Psoas muscle (tissue), 8 donors: ENCODE measurements at regions of chr1 and their contacts with region 1.

Region 1: GRCh38 chr1:54547601-54548388 is at the start of gene ACOT11:
- DNase-seq: peak; percentile 88 to 96
- ATAC-seq: peak; percentile 91 to 94 (median 93)
- H3K4me3 ChIP-seq: peak within 1 kb of the TSS; percentile 63
- H3K27ac ChIP-seq: peak within 1 kb of the TSS; percentile 90
- H3K4me1 ChIP-seq: peaks cover 49% of the 10 kb centered on the region
- H3K27me3 ChIP-seq: no peaks in the 10 kb centered on the region
- CTCF ChIP-seq: peak; percentile 68
- total RNA-seq, gene ACOT11: 2.4 to 13.9 (median 5.0) TPM

Region 2: DNA sequence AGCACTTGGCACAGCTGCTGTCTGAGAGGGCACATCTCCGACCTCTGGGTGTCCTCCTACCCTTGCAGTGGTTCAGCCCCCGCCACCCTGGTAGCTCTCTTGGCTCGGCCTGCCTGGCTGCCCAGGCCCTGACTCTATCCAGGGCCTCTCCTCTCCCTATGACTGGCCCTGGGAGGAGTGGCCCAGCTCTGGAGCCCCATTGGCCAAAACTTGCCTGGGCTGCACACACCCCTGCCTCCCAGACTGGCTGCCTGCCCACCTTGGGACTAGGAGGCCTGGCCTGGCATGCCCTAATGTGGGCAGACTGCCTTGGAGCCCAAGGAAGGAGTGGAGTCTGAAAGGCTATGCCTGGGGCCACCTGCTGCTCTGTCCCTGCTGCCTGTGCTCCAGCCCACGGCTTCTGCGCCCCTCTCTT is 33.8 kb after region 1 on chr1:
- intact Hi-C with region 1: loop called (anchors 5 kb)
- DNase-seq: peak; percentile 93 to 98
- ATAC-seq: peak; percentile 89 to 93 (median 91)
- H3K4me3 ChIP-seq: no peak overlapping the region
- H3K27ac ChIP-seq: peak overlapping the region; percentile 87
- H3K4me1 ChIP-seq: peaks cover 80% of the 10 kb centered on the region
- H3K27me3 ChIP-seq: no peaks in the 10 kb centered on the region
- CTCF ChIP-seq: no peak